Mammary epithelial cell (primary cell): ENCODE measurements at regions of chr1 and their contacts with region 1.

Region 1: DNA sequence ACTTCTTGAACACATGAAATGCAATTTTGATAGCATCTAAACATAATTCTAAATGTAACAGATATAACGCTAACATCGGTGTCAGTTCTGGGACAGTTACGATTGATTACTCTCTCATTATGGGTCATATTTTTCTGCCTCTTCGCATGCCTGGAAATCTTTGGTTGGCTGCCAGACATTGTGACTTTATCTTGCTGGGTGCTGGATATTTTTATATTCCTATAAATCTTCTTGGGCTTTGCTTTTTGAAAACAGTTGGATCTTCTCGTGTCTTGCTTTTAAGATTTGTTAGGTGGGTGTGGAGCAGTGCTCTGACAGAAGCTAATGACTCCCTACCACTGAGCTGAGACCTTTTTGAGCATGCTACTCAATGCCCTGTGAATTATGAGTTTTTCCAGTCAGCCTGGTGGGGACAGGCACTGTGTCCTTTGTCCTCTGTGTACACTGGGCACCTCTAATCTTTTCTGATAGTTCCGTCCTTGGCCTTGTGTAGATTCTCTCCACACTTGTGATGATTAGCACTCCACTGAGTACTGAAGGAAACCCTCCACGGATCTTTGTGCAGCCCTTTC is 28.0 kb upstream of the EDARADD start:
- DNase-seq: no peak
- H3K4me3 ChIP-seq: no peak overlapping the region
- H3K27ac ChIP-seq: no peak overlapping the region
- H3K4me1 ChIP-seq: no peaks in the 10 kb centered on the region
- H3K27me3 ChIP-seq: no peaks in the 10 kb centered on the region
- CTCF ChIP-seq: no peak

Region 2: GRCh38 chr1:236307435-236307834 is 58.6 kb before region 1 on chr1:
- CTCF ChIA-PET with region 1: no interaction called
- dilution Hi-C with region 1: loop called (anchors 5 kb)
- in situ Hi-C with region 1: no loop called
- intact Hi-C with region 1: no loop called
- DNase-seq: no peak
- H3K4me3 ChIP-seq: no peak overlapping the region
- H3K27ac ChIP-seq: no peak overlapping the region
- H3K4me1 ChIP-seq: peaks cover 13% of the 10 kb centered on the region
- H3K27me3 ChIP-seq: no peaks in the 10 kb centered on the region
- CTCF ChIP-seq: no peak

Region 3: DNA sequence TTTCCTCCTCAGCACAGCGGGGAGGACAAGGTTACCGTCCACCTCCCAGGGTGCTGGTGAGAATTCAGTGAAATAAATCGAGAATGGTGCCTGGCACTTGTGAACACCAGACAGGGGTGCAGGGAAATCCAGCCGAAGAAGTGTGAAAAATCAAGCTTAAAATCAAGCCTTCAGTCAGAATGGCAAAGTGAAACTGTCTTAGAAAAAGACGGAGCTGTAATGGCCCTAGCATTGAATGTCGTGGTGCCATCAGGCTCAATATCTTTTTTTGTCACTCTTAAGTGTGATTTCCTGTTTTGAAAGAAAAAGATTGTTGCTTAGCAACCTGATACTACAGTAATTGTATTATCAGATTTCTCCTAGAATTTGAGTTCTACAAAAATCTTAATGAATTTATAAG is 50.1 kb after region 1 on chr1:
- CTCF ChIA-PET with region 1: no interaction called
- dilution Hi-C with region 1: loop called (anchors 5 kb)
- in situ Hi-C with region 1: no loop called
- intact Hi-C with region 1: no loop called
- DNase-seq: no peak
- H3K4me3 ChIP-seq: no peak overlapping the region
- H3K27ac ChIP-seq: no peak overlapping the region
- H3K4me1 ChIP-seq: no peaks in the 10 kb centered on the region
- H3K27me3 ChIP-seq: no peaks in the 10 kb centered on the region
- CTCF ChIP-seq: no peak